H1 (cell line): ENCODE measurements at regions of chr15 and their contacts with region 1.

Region 1: GRCh38 chr15:92383519-92384326 is 10.0 kb upstream of the ST8SIA2 start:
- DNase-seq: peak in 1 of 2 experiments; percentile 88
- H3K4me3 ChIP-seq: no peak overlapping the region
- H3K27ac ChIP-seq: no peak overlapping the region
- H3K4me1 ChIP-seq: peaks cover 0 to 3% (median 0%) of the 10 kb centered on the region in 4 experiments; a peak in 1 of 7 replicates
- H3K27me3 ChIP-seq: peaks cover 0 to 2% (median under 1%) of the 10 kb centered on the region in 4 experiments; a peak in 2 of 7 replicates
- CTCF ChIP-seq: peak; percentile 76 to 92 (median 82)
- EP300 ChIP-seq: peak in 1 of 2 experiments; percentile 78; a peak in 2 of 3 replicates
- POLR2A ChIP-seq: no peak
- RAD21 ChIP-seq: peak; percentile 82 to 87

Region 2: DNA sequence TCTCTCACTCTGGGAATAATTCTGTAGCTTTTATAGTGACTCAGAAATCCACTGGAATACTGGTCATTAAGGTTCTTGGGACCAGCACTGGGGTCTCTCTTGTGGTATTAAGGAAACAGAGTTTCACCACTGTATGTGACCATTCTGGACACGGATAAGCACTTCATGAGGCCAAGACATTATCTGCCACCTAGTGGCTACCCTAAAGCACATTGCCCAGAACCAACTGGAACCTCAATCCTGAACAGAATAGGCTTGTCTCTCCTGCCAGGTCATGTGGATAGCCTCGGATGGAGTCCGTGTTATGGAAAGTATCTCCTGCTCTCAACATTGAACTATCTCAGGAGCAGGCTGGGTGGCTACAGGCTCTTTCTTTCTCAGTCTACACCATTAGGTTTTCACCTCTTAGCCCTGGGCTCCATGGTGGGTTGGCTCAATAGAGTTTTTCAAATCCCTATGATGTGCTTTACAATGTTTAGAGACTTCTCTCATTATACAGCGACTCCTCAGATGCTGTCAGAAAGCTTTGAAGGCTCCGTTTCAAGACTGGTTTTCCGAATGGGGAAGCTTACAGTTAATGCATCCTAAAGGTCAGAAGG is 157.6 kb before region 1 on chr15:
- CTCF ChIA-PET with region 1: no interaction called
- POLR2A ChIA-PET with region 1: no interaction called
- DNase-seq: no peak
- H3K4me3 ChIP-seq: no peak overlapping the region
- H3K27ac ChIP-seq: no peak overlapping the region
- H3K4me1 ChIP-seq: no peaks in the 10 kb centered on the region
- H3K27me3 ChIP-seq: no peaks in the 10 kb centered on the region
- CTCF ChIP-seq: peak; percentile 12 to 84 (median 74)
- EP300 ChIP-seq: no peak
- POLR2A ChIP-seq: no peak
- RAD21 ChIP-seq: peak; percentile 77 to 88

Region 3: GRCh38 chr15:92365067-92365466 is 18.7 kb before region 1 on chr15:
- CTCF ChIA-PET with region 1: interaction called, 10 read pairs
- POLR2A ChIA-PET with region 1: no interaction called
- DNase-seq: no peak
- H3K4me3 ChIP-seq: no peak overlapping the region
- H3K27ac ChIP-seq: no peak overlapping the region
- H3K4me1 ChIP-seq: no peaks in the 10 kb centered on the region
- H3K27me3 ChIP-seq: no peaks in the 10 kb centered on the region
- CTCF ChIP-seq: no peak
- EP300 ChIP-seq: no peak
- POLR2A ChIP-seq: no peak
- RAD21 ChIP-seq: no peak

Region 4: DNA sequence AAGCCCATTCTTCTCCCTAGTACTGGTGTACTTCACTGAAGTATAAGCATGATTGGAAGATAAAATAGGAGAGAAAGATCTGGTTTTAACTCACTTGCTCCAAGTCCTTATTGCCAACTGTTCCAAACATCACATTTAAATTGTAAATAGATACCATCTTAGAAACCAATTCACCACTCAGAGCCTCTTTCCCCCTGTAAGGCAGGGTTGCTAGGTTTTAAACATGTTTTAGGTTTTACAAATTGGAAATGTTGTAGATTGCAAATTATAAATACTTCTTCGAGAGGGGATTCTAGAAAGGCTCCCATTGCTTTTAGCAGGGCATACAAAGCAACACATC is 15.9 kb after region 1 on chr15:
- CTCF ChIA-PET with region 1: no interaction called
- POLR2A ChIA-PET with region 1: no interaction called
- DNase-seq: no peak
- H3K4me3 ChIP-seq: no peak overlapping the region
- H3K27ac ChIP-seq: no peak overlapping the region
- H3K4me1 ChIP-seq: peaks cover 0 to 10% (median 2%) of the 10 kb centered on the region in 4 experiments; a peak in 3 of 7 replicates
- H3K27me3 ChIP-seq: peaks cover 7 to 22% (median 17%) of the 10 kb centered on the region in 4 experiments
- CTCF ChIP-seq: no peak
- EP300 ChIP-seq: no peak
- POLR2A ChIP-seq: no peak
- RAD21 ChIP-seq: no peak